ENCODE measurements at regions of chr12 and their contacts with region 1.

Region 1: GRCh38 chr12:6735448-6736191 is 11.8 kb downstream of the COPS7A start:
- ATAC-seq: peak; percentile 94 to 97 (median 96)
- H3K4me3 ChIP-seq: no peak overlapping the region
- H3K27ac ChIP-seq: no peak overlapping the region
- H3K4me1 ChIP-seq: peaks cover 3 to 4% of the 10 kb centered on the region in 2 donors

Region 2: GRCh38 chr12:6825398-6826124 is 89.9 kb after region 1 on chr12:
- in situ Hi-C with region 1: loop called in 1 of 9 experiments (anchors 25 kb)
- ATAC-seq: peak; percentile 28 to 75 (median 32)
- H3K4me3 ChIP-seq: peak overlapping the region; percentile 0 to 7 (median 4)
- H3K27ac ChIP-seq: peak overlapping the region; percentile 74 to 78
- H3K4me1 ChIP-seq: peaks cover 49 to 62% of the 10 kb centered on the region in 2 donors

Measured in motor neuron (in vitro differentiated cells).